MCF 10A (cell line): ENCODE measurements at regions of chr17 and their contacts with region 1.

Region 1: DNA sequence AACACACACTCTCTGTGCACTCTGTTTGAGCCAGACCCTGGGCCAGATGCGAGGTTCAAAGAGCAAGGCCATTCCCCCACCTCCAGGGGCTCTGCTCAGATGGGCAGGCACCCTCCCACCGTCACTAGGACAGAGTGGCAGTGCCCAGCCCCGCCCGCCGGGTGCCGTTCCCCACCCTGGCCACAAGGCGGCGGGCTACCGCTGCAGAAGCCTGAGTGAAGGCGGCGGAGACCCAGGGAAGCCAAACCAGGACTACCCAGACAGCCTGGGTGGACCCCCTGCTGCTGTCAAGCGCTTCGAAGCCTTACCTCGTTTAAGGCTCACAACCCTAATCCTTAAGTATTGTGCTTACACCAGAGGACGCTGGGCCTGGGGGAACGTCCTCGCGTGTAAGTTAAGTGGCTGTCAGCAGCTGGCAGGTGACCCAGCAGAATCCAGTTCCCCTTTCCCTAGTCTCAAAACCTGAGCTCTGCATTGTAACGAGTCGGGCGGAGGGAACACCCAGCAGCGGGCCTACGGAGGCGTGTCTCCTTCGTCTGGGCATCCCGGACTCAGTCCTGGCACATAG is 4.5 kb downstream of the ARHGAP27 start:
- DNase-seq: peak; percentile 69
- H3K4me3 Mint-ChIP-seq: no peak overlapping the region
- H3K27ac Mint-ChIP-seq: peak overlapping the region; percentile 27
- H3K4me1 Mint-ChIP-seq: peaks cover 28% of the 10 kb centered on the region
- H3K27me3 Mint-ChIP-seq: no peaks in the 10 kb centered on the region
- CTCF ChIP-seq: peak; percentile 98

Region 2: GRCh38 chr17:45218895-45219661 is 209.1 kb before region 1 on chr17:
- CTCF ChIA-PET with region 1: interaction called, 11 read pairs
- POLR2A ChIA-PET with region 1: interaction called, 3 read pairs
- intact Hi-C with region 1: loop called (anchors 1 kb)
- DNase-seq: peak; percentile 86
- H3K4me3 Mint-ChIP-seq: no peak overlapping the region
- H3K27ac Mint-ChIP-seq: no peak overlapping the region
- H3K4me1 Mint-ChIP-seq: peaks cover 11% of the 10 kb centered on the region
- H3K27me3 Mint-ChIP-seq: no peaks in the 10 kb centered on the region
- CTCF ChIP-seq: peak; percentile 95

Region 3: DNA sequence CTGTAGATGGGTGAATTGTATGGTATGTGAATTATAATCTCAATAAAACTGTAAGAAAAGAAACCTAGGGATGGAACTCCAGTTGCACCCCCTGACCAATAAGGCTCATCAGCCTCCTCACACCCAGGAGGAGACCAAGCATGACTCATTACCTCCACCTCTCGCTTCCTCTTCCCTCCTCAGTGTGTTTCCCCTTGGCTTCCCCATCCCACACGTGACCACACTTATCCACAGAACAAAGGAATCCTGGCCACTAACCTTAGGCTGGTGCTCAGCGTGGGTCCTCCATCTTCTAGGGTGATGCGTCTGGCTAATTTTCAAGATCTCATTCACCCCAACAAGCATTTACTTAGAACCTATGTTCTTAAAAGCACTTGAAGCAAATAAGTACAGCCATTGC is 75.1 kb before region 1 on chr17:
- CTCF ChIA-PET with region 1: no interaction called
- POLR2A ChIA-PET with region 1: no interaction called
- intact Hi-C with region 1: no loop called
- DNase-seq: no peak
- H3K4me3 Mint-ChIP-seq: no peak overlapping the region
- H3K27ac Mint-ChIP-seq: no peak overlapping the region
- H3K4me1 Mint-ChIP-seq: peaks cover 6% of the 10 kb centered on the region
- H3K27me3 Mint-ChIP-seq: no peaks in the 10 kb centered on the region
- CTCF ChIP-seq: no peak

Region 4: DNA sequence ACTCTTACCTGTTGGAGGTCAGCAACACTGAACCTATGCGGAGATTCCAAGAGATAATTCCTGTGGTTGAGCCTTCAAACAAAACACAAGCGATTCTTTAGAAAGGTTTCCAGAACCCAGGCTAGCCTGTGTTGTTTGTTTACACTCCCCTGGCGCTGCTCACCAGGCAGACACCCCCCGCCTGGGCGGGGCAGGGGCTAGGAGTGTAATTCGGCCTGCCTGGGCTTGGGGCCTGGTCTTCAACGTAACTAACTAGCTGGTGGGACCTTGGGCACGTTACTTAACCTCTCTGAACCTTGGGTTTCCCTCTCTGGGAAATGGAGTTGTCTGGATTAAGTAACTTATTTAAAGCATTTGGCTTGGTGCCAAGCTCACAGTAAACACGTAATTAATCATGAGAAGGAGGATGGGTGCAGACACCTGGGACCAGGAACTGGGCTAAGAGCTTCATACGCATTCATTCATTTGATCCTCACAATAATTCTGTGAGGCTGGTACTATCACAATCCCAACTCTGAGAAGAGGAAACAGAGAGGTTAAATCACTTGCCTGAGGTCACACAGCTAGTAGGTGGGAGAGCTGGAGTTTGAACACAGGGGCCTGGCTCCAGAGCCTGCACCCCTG is 12.1 kb after region 1 on chr17:
- CTCF ChIA-PET with region 1: interaction called, 6 read pairs
- POLR2A ChIA-PET with region 1: interaction called, 21 read pairs
- intact Hi-C with region 1: no loop called
- DNase-seq: peak; percentile 77
- H3K4me3 Mint-ChIP-seq: peak overlapping the region; percentile 38
- H3K27ac Mint-ChIP-seq: peak overlapping the region; percentile 66
- H3K4me1 Mint-ChIP-seq: peaks cover 20% of the 10 kb centered on the region
- H3K27me3 Mint-ChIP-seq: no peaks in the 10 kb centered on the region
- CTCF ChIP-seq: no peak

Region 5: GRCh38 chr17:45451141-45451540 is 23.0 kb after region 1 on chr17:
- CTCF ChIA-PET with region 1: interaction called, 3 read pairs
- POLR2A ChIA-PET with region 1: interaction called, 23 read pairs
- intact Hi-C with region 1: no loop called
- DNase-seq: no peak
- H3K4me3 Mint-ChIP-seq: no peak overlapping the region
- H3K27ac Mint-ChIP-seq: no peak overlapping the region
- H3K4me1 Mint-ChIP-seq: peaks cover 23% of the 10 kb centered on the region
- H3K27me3 Mint-ChIP-seq: no peaks in the 10 kb centered on the region
- CTCF ChIP-seq: no peak

Region 6: GRCh38 chr17:45584092-45585036 is 156.2 kb after region 1 on chr17:
- CTCF ChIA-PET with region 1: interaction called, 5 read pairs
- POLR2A ChIA-PET with region 1: interaction called, 18 read pairs
- intact Hi-C with region 1: loop called (anchors 2 kb)
- DNase-seq: peak; percentile 81
- H3K4me3 Mint-ChIP-seq: peak overlapping the region; percentile 77
- H3K27ac Mint-ChIP-seq: peak overlapping the region; percentile 76
- H3K4me1 Mint-ChIP-seq: peaks cover 23% of the 10 kb centered on the region
- H3K27me3 Mint-ChIP-seq: no peaks in the 10 kb centered on the region
- CTCF ChIP-seq: no peak